Activated T-helper 2 cell treated with anti-CD3 and anti-CD28 coated beads, Interferon-gamma antibody, Interleukin-2, Interleukin-4, amounts not matched to agents 10 μg/mL and 5 μg/mL and 100 μg/mL, durations not matched to agents 14 hours and 24 hours and 36 hours (primary cell): ENCODE measurements at regions of chr5 and their contacts with region 1.

Region 1: DNA sequence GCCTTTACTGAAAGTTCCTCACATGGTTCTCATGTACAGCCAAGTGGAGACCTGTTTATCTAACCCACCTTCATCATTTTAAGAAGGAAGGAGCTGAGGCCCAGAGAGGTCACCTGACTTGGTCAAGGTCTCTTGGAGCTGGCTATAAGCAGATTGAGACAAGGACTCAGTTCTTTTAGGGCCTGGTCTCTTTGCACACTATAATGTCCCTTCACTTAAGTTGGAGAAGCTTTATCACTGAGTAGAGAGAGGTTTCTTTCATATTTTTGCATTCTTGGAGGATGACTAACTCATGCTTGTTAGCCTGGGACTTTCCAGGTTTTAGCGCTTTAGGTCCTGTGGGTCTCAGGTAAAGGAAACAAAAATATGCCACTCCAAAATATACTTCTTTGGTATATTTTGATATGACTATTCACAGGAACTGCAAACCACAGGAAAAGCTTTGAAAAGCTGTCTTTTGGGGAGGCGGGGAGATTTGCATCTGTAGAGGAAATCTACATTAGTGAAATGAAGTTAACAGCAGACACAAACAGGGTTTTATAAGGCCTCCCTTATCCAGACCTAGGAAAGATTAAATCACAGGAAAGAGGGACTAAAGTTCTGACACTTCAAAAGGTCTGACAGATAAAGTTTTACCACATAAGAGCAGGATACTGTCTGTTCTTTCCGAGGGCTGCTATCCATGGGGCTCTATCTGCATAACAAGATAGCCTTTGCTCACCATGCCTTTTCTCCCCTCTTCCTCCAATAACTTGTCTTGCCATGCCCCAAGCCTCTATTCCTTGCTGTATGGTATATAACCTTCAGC is 95.8 kb upstream of the ANKRD55 start:
- DNase-seq: peak; percentile 52
- H3K4me3 Mint-ChIP-seq: peak overlapping the region; percentile 58
- H3K27ac Mint-ChIP-seq: peak overlapping the region; percentile 89
- H3K4me1 Mint-ChIP-seq: peaks cover 60% of the 10 kb centered on the region
- H3K27me3 Mint-ChIP-seq: no peaks in the 10 kb centered on the region

Region 2: GRCh38 chr5:55850839-55851674 is 477.9 kb before region 1 on chr5 and contains the start of gene IL31RA:
- intact Hi-C with region 1: loop called (anchors 10 kb)
- DNase-seq: no peak
- H3K4me3 Mint-ChIP-seq: no peak within 1 kb of the TSS
- H3K27ac Mint-ChIP-seq: no peak within 1 kb of the TSS
- H3K4me1 Mint-ChIP-seq: peaks cover 54% of the 10 kb centered on the region
- H3K27me3 Mint-ChIP-seq: peaks cover 2% of the 10 kb centered on the region
- total RNA-seq, gene IL31RA: not detected in 2 replicates

Region 3: DNA sequence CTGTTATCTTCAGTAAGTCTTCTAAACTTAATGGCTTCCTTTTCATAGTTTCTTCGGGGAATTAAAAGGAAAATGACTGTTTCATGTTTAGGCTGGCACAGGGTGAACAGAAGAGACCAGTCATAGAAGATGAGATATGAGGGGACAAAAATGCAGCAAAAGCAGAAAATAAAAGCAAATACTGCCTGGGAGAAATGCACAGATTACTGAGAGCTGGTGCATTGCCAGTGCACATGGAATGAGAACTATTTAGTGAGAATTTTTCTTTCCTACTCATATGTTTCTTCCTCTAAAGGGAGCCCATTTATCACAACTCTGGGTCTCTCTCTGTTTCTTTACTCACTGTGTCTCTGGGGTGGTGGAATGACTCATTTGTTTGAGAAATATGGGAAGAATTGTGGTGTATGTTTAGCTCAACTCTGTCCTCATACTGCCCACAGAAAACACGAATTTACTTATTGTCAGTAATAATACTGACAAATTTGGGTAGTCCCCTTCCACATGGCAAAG is 69.9 kb before region 1 on chr5:
- intact Hi-C with region 1: loop called (anchors 1 kb)
- DNase-seq: no peak
- H3K4me3 Mint-ChIP-seq: no peak overlapping the region
- H3K27ac Mint-ChIP-seq: no peak overlapping the region
- H3K4me1 Mint-ChIP-seq: peaks cover 6% of the 10 kb centered on the region
- H3K27me3 Mint-ChIP-seq: peaks cover 36% of the 10 kb centered on the region

Region 4: DNA sequence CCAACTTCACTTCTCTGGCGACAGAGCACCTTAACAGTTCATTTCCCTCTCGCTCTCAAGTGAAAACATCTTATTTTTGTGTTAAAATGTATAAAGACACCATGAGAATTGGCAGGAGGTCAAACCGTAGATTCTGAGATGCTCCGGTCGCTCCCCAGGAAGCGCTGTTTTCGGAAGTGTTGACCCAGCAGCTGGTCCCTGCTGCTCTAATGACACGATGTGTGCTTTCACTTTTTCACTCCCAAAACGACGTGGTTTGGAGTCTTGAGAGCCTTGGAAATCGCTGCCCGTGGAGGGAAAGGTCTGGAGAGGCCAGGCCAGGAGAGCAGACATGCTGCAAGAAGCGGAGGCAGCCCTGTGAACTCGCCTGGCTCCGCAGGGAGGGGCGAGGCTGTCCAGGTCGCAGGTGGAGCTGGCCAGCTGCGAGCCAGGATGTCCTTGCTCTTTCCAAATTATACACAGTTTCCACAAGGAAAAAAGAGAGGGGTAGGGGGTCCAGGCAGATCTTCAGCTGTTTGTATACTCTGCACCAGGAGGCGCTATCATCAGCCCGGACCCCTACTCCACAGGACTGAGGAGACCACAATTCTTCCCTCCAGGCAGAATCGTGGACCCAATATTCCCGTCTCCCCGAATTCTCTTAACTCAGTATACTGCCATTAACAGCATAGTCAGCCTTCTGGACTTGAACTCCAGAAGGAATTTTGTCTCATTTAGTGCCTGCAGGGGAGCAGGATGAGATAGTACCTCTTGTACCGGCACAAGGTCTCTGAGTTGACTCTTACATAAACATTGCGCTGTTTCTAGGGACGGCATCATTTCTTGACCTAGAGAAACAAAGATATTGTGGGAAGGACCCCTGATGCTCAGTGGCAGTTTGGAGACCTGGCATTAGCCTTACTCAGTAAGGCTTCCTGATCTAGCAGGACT is 152.7 kb after region 1 on chr5:
- intact Hi-C with region 1: loop called (anchors 1 kb)
- DNase-seq: no peak
- H3K4me3 Mint-ChIP-seq: peak overlapping the region; percentile 78
- H3K27ac Mint-ChIP-seq: peak overlapping the region; percentile 82
- H3K4me1 Mint-ChIP-seq: peaks cover 44% of the 10 kb centered on the region
- H3K27me3 Mint-ChIP-seq: no peaks in the 10 kb centered on the region

Region 5: GRCh38 chr5:56710826-56711590 is 382.1 kb after region 1 on chr5:
- intact Hi-C with region 1: loop called (anchors 1 kb)
- DNase-seq: no peak
- H3K4me3 Mint-ChIP-seq: no peak overlapping the region
- H3K27ac Mint-ChIP-seq: no peak overlapping the region
- H3K4me1 Mint-ChIP-seq: peaks cover 21% of the 10 kb centered on the region
- H3K27me3 Mint-ChIP-seq: peaks cover 27% of the 10 kb centered on the region

Region 6: GRCh38 chr5:57173185-57174127 is 844.5 kb after region 1 on chr5 and contains the start of gene GPBP1:
- intact Hi-C with region 1: loop called (anchors 1 kb)
- DNase-seq: peak; percentile 96
- H3K4me3 Mint-ChIP-seq: peak within 1 kb of the TSS; percentile 96
- H3K27ac Mint-ChIP-seq: peak within 1 kb of the TSS; percentile 99
- H3K4me1 Mint-ChIP-seq: peaks cover 33% of the 10 kb centered on the region
- H3K27me3 Mint-ChIP-seq: no peaks in the 10 kb centered on the region
- total RNA-seq, gene GPBP1: 87.4 and 92.0 TPM in 2 replicates